GM10248 (cell line): ENCODE measurements at regions of chr10 and their contacts with region 1.

Region 1: GRCh38 chr10:91298224-91298871 is 77.9 kb downstream of the PCGF5 start:
- DNase-seq: peak; percentile 82
- CTCF ChIP-seq: peak; percentile 95

Region 2: DNA sequence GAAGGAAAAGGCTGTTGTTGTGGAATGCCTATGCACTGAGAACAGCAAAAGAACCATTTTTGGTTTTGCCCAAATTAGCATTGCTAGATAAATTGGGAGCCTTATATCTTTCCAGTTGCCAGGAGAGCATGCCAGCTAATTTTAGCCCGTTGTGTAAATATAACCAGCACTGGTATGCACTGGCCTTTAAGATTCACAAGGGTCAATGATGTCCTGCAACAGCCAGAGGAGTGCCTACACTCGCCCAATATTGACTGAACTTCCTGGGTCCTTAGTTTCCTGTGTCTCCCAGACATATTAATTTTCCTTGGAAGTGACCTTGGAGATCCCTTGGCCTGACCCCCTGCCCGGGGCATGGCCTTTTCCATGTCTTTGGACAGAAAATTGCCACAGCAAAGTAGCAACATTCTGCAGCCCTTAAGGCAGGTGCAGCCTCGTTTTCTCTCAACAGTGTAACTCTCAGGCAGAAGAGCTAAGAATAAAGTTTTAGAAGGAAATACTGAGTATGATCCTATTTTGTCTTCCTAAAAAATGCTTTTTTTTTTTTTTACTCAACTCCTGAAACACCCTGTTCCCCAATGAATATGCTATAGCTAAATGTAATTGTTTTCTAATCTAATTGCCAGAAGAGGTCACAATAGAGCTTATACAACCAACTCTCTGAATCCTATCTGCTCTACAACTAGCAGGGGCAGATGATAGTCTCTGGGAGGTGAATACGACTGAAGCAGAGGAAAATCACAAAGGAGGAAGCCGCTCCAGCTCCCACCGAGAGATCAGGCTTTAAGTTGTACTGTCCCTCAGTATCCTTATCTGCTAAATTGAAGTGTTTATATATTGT is 209.8 kb before region 1 on chr10:
- CTCF ChIA-PET with region 1: interaction called, 13 read pairs
- POLR2A ChIA-PET with region 1: no interaction called
- DNase-seq: peak; percentile 38
- CTCF ChIP-seq: peak; percentile 20

Region 3: DNA sequence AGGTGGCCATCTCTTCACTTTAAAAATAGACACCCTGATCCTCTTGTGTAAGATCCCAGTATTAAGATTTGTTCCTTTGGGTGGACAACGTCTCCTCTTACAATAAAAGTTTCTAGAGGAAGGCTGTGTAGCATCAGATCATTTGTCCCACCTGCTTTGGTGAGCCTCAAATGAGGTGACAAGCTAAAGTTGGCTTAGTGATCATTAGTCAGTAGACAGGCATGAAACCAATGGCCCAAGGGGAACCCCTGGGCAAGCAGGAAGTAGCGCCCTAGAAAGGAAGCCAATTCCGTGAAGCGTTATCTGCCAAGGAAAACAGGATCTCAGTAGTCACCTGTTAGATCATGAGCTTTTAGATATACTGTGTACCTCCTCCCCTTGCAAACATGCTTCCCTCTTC is 11.1 kb before region 1 on chr10:
- CTCF ChIA-PET with region 1: interaction called, 84 read pairs
- POLR2A ChIA-PET with region 1: no interaction called
- DNase-seq: no peak
- CTCF ChIP-seq: no peak

Region 4: GRCh38 chr10:91389636-91390512 is 91.5 kb after region 1 on chr10:
- CTCF ChIA-PET with region 1: interaction called, 20 read pairs
- POLR2A ChIA-PET with region 1: interaction called, 3 read pairs
- DNase-seq: peak; percentile 33
- CTCF ChIP-seq: peak; percentile 52

Region 5: GRCh38 chr10:91694170-91694794 is 395.9 kb after region 1 on chr10:
- CTCF ChIA-PET with region 1: interaction called, 11 read pairs
- POLR2A ChIA-PET with region 1: no interaction called
- DNase-seq: peak; percentile 46
- CTCF ChIP-seq: peak; percentile 29